Activated CD4-positive, alpha-beta memory T cell treated with anti-CD3 and anti-CD28 coated beads for 36 hours (primary cell): ENCODE measurements at regions of chrX and their contacts with region 1.

Region 1: DNA sequence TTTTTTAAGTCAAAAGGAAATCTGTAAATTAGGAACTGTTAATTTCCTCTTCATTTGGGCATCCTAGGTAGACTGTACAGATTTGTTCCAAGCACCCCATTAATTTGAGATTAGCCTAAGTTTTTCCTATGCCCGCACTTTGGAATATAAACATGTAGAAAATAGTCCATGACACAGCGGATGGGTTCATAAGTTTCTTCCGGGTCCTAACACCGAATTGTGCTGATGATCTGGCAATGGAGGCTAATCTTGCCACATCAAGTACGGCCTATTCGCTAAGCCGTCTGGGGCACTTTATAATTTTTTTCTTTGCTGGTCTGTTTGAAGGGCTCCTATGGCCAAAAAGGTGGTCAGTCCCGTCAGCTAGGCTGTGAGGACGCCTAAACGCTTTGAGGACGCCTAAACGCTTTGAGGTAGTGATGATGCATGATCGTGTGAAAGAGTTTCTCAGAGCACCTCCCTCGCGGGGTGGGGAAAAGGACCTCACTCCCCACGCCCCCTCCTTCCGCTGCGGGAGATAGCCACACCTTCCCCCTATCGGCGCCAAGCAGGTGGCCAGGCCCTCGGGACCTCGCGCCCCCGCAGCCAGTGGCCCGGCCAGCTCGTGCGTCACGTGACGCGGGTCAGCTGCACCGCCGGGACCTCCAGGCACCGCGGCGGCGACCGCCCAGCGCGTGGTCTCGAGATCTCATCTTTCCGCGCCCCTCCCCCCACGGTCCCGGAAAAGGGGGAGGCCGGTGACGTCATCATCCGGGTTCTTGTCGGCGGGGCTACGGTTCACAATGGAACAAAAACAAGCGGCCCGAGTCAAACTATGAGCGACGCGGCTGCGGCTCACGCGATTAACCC is 977 bp upstream of the USP9X start:
- DNase-seq: peak; percentile 96
- H3K4me3 Mint-ChIP-seq: peak overlapping the region; percentile 80
- H3K27ac Mint-ChIP-seq: peak overlapping the region; percentile 100
- H3K4me1 Mint-ChIP-seq: peaks cover 14% of the 10 kb centered on the region
- H3K27me3 Mint-ChIP-seq: no peaks in the 10 kb centered on the region

Region 2: GRCh38 chrX:40580537-40581335 is 503.5 kb before region 1 on chrX and contains the start of gene ATP6AP2:
- CTCF ChIA-PET with region 1: no interaction called
- POLR2A ChIA-PET with region 1: no interaction called
- intact Hi-C with region 1: loop called (anchors 10 kb)
- DNase-seq: peak; percentile 94
- H3K4me3 Mint-ChIP-seq: peak within 1 kb of the TSS; percentile 84
- H3K27ac Mint-ChIP-seq: peak within 1 kb of the TSS; percentile 87
- H3K4me1 Mint-ChIP-seq: peaks cover 20% of the 10 kb centered on the region
- H3K27me3 Mint-ChIP-seq: no peaks in the 10 kb centered on the region
- total RNA-seq, gene ATP6AP2: 62.5 to 65.5 TPM

Region 3: DNA sequence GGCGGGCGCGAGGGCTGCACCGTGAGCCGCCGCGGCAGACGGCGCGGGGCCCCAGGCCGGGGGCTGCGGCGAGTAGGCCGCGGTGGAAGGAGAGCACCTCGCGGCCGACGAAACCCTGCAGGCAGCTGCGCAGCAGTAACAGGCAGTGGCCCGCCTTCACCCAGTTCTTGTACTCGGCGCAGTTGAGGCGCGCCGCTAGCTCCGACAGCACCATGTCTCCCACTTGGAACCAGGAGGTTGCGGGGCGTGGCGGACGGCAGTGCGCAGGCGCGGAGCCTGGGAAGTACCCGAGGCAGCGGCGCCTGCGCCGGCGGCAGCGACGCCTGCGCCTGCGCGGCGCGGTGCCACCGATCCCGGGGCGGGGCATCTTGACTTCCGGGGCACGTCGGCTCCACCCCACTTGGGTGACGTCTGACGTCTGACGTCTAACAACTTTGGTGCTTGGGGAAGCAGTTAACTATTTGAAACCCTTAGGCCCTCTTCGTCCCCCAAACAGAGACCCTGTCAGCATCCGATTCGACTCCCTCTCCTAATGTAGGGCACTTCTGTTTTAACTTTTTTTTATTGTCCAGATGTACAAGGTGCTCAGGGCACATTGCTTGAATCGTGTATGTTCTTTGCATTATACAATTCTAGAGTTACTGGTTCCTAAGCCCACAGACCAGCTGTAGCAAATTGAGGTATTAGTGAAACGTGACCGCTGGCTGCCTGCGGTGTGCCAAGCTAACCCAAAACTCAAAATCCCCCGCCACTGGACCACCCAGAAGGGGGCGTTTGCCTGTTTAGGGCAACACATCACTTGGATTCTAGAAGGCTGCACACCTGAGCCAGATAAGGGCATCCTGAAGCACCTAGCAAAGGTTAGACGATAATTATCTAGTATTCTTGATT is 436.7 kb before region 1 on chrX and contains the start of gene CXorf38:
- CTCF ChIA-PET with region 1: no interaction called
- POLR2A ChIA-PET with region 1: interaction called, 9 read pairs
- intact Hi-C with region 1: loop called (anchors 2 kb)
- DNase-seq: peak; percentile 94
- H3K4me3 Mint-ChIP-seq: peak within 1 kb of the TSS; percentile 96
- H3K27ac Mint-ChIP-seq: peak within 1 kb of the TSS; percentile 94
- H3K4me1 Mint-ChIP-seq: peaks cover 19% of the 10 kb centered on the region
- H3K27me3 Mint-ChIP-seq: no peaks in the 10 kb centered on the region
- total RNA-seq, gene CXorf38: 20.2 to 20.5 TPM

Region 4: DNA sequence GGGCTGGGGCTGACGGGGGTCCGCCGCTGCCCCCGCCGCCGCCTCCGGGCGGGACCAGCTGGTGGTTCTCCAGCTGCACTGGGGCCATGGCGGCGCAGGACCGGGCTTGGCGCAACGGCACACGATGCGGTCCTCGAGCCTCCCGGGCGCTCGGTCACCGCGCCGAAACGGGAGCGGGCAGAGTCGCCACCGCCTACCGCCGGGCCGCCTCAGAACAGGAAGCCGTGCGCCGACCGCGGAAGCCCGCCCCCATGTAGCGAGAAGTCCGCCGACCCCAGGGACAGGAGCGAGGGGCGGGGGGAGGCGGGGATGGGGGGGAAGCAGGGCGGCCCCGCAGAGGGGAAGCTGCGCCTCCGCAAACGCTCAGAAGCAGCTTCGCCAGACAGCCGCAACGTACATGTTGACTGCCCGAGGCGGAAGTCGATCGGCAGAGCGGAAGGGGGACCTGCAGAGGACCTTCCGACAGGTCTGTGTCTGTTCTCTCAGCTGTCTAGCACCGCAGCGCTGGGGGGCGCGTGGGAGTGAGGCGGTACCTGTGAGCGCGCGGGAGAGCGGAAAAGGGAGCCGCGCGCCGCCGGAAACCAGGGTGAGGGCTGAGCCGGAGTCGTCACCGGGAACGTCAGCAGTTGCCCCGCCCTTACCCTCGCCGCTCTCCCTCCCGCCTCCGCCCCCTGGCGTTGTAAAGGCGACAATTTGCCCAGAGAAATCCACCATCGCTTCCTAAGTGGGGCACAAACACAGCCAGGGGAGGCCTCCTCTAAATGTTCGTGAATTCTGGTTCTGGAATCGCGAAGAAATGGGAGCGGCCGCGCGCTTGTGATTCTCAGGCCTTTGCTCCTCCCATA is 348.7 kb before region 1 on chrX and contains the start of gene MED14:
- CTCF ChIA-PET with region 1: no interaction called
- POLR2A ChIA-PET with region 1: no interaction called
- intact Hi-C with region 1: loop called (anchors 2 kb)
- DNase-seq: peak; percentile 93
- H3K4me3 Mint-ChIP-seq: peak within 1 kb of the TSS; percentile 84
- H3K27ac Mint-ChIP-seq: peak within 1 kb of the TSS; percentile 92
- H3K4me1 Mint-ChIP-seq: peaks cover 44% of the 10 kb centered on the region
- H3K27me3 Mint-ChIP-seq: no peaks in the 10 kb centered on the region
- total RNA-seq, gene MED14: 46.4 to 49.4 TPM

Region 5: GRCh38 chrX:40933132-40933705 is 151.0 kb before region 1 on chrX:
- CTCF ChIA-PET with region 1: no interaction called
- POLR2A ChIA-PET with region 1: interaction called, 4 read pairs
- intact Hi-C with region 1: loop called (anchors 2 kb)
- DNase-seq: peak; percentile 32
- H3K4me3 Mint-ChIP-seq: peak overlapping the region; percentile 44
- H3K27ac Mint-ChIP-seq: peak overlapping the region; percentile 69
- H3K4me1 Mint-ChIP-seq: peaks cover 23% of the 10 kb centered on the region
- H3K27me3 Mint-ChIP-seq: no peaks in the 10 kb centered on the region

Region 6: GRCh38 chrX:41010188-41010846 is 74.0 kb before region 1 on chrX:
- CTCF ChIA-PET with region 1: no interaction called
- POLR2A ChIA-PET with region 1: no interaction called
- intact Hi-C with region 1: loop called (anchors 5 kb)
- DNase-seq: peak; percentile 74
- H3K4me3 Mint-ChIP-seq: peak overlapping the region; percentile 52
- H3K27ac Mint-ChIP-seq: peak overlapping the region; percentile 45
- H3K4me1 Mint-ChIP-seq: peaks cover 20% of the 10 kb centered on the region
- H3K27me3 Mint-ChIP-seq: no peaks in the 10 kb centered on the region

Region 7: GRCh38 chrX:41127477-41128192 is 43.4 kb after region 1 on chrX:
- CTCF ChIA-PET with region 1: no interaction called
- POLR2A ChIA-PET with region 1: no interaction called
- intact Hi-C with region 1: no loop called
- DNase-seq: no peak
- H3K4me3 Mint-ChIP-seq: no peak overlapping the region
- H3K27ac Mint-ChIP-seq: no peak overlapping the region
- H3K4me1 Mint-ChIP-seq: peaks cover 34% of the 10 kb centered on the region
- H3K27me3 Mint-ChIP-seq: no peaks in the 10 kb centered on the region